Heart right ventricle (tissue), 16 donors: ENCODE measurements at regions of chr11 and their contacts with region 1.

Region 1: DNA sequence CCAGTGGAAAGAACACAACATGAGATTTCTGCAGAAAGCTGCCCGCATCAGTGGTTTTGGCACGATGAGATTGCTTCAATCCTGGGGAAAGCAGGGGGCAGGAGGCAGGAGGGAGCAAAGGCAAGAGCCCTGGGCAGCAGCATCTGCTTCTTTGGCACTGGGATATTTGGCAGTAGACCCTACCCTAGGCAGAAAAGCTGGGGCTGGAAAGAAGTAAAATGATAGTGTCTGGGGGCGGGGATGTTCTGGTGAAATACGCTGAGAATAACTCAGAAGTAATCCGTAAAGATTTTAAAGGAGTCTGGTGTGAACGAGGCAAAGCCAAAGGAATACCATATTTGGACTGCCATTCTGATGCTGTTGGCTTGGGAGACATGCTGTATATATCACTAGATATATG is 62.0 kb downstream of the FAM76B start:
- DNase-seq: no peak
- ATAC-seq: no peak
- H3K4me3 ChIP-seq: no peak overlapping the region
- H3K27ac ChIP-seq: no peak overlapping the region
- H3K4me1 ChIP-seq: no peaks in the 10 kb centered on the region
- H3K27me3 ChIP-seq: no peaks in the 10 kb centered on the region
- CTCF ChIP-seq: no peak

Region 2: DNA sequence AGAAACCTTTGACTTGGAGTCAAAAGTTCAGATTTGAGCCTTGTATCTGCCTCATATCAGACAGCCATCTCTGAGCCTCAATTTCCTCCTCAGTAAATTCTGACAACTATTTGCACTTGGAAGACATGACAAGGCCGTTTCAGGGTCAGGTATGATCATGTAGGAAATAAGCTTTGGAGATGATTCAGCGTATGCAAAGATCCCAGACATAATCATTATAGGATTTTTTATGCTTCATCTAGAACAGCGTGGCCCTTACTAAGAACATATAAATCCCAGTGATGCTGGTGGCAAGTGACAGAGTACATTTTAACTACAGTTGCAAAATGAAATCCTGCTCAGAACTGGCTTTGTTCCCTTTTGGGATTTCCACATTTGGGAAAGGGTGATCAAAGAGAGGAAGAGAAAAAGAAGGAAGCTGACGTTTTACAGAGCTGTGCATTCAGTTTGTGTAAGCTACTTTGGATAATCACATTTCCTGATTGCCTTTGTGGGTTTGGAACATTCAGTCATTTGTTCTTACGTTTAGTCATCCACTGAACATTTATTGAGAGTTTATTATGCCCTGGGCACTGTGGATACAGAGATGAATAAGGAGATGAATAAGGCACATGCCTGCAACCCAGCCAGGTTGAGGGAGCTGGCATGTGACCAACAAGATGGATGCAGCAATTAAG is 1788.4 kb before region 1 on chr11:
- intact Hi-C with region 1: loop called in 1 of 10 experiments (anchors 10 kb)
- DNase-seq: no peak
- ATAC-seq: no peak
- H3K4me3 ChIP-seq: no peak overlapping the region
- H3K27ac ChIP-seq: no peak overlapping the region
- H3K4me1 ChIP-seq: no peaks in the 10 kb centered on the region
- H3K27me3 ChIP-seq: peaks cover 0 to 17% (median 0%) of the 10 kb centered on the region in 7 donors
- CTCF ChIP-seq: no peak

Region 3: GRCh38 chr11:96978751-96979150 is 1251.1 kb after region 1 on chr11:
- intact Hi-C with region 1: no loop called
- DNase-seq: no peak
- ATAC-seq: no peak
- H3K4me3 ChIP-seq: no peak overlapping the region
- H3K27ac ChIP-seq: no peak overlapping the region
- H3K4me1 ChIP-seq: no peaks in the 10 kb centered on the region
- H3K27me3 ChIP-seq: no peaks in the 10 kb centered on the region
- CTCF ChIP-seq: no peak